ENCODE measurements at regions of chr4 and their contacts with region 1.

Region 1: DNA sequence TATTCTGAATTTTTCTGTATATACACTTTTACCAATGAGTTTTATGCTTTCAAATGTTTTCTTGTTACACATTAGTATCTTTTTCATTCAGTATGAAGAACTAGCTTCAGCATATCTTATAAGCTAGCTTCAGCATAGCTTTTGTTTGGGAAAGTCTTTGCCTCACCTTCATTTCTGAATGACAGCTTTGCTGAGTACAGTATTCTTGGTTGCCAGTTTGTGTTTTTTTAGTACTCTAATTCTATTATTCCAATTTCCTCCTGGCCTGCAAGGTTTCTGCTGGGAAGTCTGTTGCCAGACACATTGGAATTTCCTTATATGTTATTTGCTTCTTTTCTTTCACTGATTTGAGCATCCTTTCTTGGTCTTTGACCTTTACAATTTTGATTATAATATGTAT is 278.8 kb downstream of the SPATA18 start:
- DNase-seq: no peak
- ATAC-seq: no peak
- H3K4me3 ChIP-seq: no peak overlapping the region
- H3K27ac ChIP-seq: no peak overlapping the region
- H3K4me1 ChIP-seq: no peaks in the 10 kb centered on the region
- H3K27me3 ChIP-seq: no peaks in the 10 kb centered on the region
- CTCF ChIP-seq: no peak
- POLR2A ChIP-seq: no peak

Region 2: DNA sequence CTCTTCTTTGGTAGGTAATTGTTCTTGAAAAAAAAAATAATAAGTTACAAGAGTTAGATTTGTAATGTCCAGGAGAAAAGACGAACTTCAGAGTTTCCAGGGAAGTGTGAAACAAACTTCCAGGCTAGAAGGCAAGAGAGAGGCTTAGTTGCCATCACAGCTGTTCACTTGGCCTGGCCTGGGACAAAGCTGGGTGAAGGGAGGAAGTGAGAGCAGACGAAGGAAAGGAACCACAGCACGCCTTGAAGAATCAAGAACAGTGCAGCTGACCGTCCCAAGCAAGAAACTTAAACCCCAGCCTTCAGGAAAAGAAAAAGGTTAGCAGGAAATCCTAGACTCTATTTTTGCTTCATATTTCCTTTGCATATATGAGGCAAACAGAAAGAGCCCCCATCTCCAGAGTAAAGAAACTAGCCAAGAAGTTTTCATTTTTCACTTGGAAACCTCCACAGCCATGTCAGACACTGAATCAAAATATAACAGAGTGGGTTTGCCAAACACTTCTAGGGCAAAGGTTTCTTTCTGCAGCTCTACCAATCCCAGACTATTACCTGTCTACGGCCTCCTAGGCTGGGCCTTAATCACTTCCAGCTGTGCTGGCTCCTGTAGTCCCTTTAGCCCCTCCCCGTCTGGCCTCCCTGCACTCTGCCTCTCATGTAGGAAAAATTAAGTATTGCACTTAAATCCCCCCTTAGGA is 69.2 kb before region 1 on chr4:
- intact Hi-C with region 1: loop called in 1 of 10 experiments (anchors 10 kb)
- DNase-seq: peak in 4 of 5 donors; percentile 28 to 51 (median 40)
- ATAC-seq: peak; percentile 74 to 87 (median 76)
- H3K4me3 ChIP-seq: no peak overlapping the region
- H3K27ac ChIP-seq: peak overlapping the region in 6 of 12 donors; percentile 27 to 61 (median 46)
- H3K4me1 ChIP-seq: peaks cover 0 to 23% (median 3%) of the 10 kb centered on the region in 12 donors
- H3K27me3 ChIP-seq: no peaks in the 10 kb centered on the region
- CTCF ChIP-seq: no peak
- POLR2A ChIP-seq: no peak